Pancreas (tissue), 10 donors: ENCODE measurements at regions of chr22 and their contacts with region 1.

Region 1: DNA sequence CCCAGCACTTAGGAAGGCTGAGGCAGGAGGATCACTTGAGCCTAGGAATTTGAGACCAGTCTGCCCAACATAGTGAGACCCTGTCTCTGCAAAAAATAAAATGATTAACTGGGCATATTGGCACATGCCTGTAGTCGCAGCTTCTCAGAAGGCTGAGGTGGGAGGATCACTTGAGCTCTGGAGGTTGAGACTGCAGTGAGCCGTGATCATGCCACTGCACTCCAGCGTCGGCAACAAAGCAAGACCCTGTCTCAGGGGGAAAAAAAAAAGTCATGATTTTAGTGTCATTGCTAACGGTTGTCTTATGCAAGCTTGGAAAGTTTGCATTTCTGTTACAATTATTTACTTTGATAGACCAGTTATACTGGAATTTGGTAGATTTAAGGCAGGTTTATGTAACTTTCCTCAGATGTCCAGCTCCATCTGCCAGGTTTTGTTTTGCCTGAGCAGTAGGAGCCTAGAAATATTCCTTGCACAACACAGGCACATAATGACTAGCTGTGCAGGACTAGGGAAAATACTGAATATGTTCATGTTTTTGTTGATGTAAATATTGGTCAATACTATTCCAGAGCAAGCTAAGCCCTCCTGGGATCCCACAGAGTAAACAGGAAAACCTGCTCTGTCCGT is 12.1 kb downstream of the UBE2L3 start:
- DNase-seq: no peak
- ATAC-seq: no peak
- H3K4me3 ChIP-seq: no peak overlapping the region
- H3K27ac ChIP-seq: no peak overlapping the region
- H3K4me1 ChIP-seq: peaks cover 8 to 11% (median 10%) of the 10 kb centered on the region in 3 donors
- H3K27me3 ChIP-seq: no peaks in the 10 kb centered on the region
- CTCF ChIP-seq: no peak

Region 2: DNA sequence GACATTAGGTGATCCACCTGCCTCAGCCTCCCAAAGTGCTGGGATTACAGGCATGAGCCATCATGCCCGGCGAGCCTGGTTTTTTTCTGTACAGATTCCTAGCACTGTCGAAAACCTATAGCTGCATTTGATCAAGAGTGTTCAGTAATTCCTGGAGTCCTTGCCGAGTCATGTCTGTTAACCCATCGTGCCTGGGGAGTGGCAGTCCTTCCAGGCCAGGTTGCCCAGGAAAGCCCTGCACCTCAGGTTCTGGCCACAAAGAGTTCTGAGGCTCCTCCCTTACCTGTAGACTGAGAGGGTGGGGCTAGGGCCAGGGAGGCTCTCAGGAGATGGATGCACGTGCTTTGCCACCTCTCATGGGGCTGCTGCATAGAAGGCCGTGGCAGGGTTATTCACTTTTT is 33.2 kb after region 1 on chr22:
- intact Hi-C with region 1: loop called in 1 of 3 experiments (anchors 5 kb)
- DNase-seq: no peak
- ATAC-seq: peak in 1 of 4 donors; percentile 20
- H3K4me3 ChIP-seq: no peak overlapping the region
- H3K27ac ChIP-seq: no peak overlapping the region
- H3K4me1 ChIP-seq: peaks cover 0 to 10% (median 5%) of the 10 kb centered on the region in 3 donors
- H3K27me3 ChIP-seq: no peaks in the 10 kb centered on the region
- CTCF ChIP-seq: no peak

Region 3: GRCh38 chr22:21629262-21630149 is 49.9 kb after region 1 on chr22 and contains the start of gene YDJC:
- intact Hi-C with region 1: loop called in 1 of 3 experiments (anchors 5 kb)
- DNase-seq: peak; percentile 92 to 98 (median 97)
- ATAC-seq: peak; percentile 95 to 98 (median 96)
- H3K4me3 ChIP-seq: peak within 1 kb of the TSS; percentile 91 to 100 (median 96)
- H3K27ac ChIP-seq: peak within 1 kb of the TSS; percentile 68 to 80 (median 72)
- H3K4me1 ChIP-seq: peaks cover 11 to 12% (median 11%) of the 10 kb centered on the region in 3 donors
- H3K27me3 ChIP-seq: no peaks in the 10 kb centered on the region
- CTCF ChIP-seq: peak; percentile 23 to 48 (median 26)
- total RNA-seq, gene YDJC: 11.2 to 22.5 (median 13.6) TPM

Region 4: DNA sequence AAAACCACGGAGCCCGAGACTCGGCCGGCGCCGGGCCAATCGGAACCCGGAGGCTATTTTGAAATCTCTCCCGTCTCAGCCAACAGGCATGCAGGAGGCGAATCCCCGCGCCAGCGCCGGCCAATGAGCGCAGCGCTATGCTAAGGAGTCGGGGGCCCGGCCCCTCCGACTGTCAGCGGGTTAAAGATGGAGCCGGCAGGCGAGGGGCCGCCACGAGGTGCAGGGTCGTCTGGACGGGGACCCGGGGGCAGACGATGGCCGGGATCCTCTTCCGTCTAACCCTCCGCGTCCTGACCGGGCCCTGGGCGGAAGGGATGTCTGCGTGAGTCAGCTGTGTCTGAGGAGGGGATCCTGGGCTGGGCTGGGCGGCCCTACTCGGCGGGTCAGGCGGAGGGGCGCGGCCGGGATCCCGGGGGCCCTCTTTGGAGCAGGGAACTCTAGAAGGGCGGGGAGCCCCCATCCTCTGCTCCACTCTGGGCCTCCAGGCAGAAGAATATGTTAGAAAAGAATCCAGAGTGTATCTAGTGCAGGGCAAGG is 72.4 kb after region 1 on chr22:
- intact Hi-C with region 1: no loop called
- DNase-seq: peak in 5 of 6 donors; percentile 62 to 87 (median 65)
- ATAC-seq: peak; percentile 54 to 90 (median 86)
- H3K4me3 ChIP-seq: peak overlapping the region; percentile 14 to 50 (median 19)
- H3K27ac ChIP-seq: no peak overlapping the region
- H3K4me1 ChIP-seq: no peaks in the 10 kb centered on the region
- H3K27me3 ChIP-seq: no peaks in the 10 kb centered on the region
- CTCF ChIP-seq: no peak

Region 5: DNA sequence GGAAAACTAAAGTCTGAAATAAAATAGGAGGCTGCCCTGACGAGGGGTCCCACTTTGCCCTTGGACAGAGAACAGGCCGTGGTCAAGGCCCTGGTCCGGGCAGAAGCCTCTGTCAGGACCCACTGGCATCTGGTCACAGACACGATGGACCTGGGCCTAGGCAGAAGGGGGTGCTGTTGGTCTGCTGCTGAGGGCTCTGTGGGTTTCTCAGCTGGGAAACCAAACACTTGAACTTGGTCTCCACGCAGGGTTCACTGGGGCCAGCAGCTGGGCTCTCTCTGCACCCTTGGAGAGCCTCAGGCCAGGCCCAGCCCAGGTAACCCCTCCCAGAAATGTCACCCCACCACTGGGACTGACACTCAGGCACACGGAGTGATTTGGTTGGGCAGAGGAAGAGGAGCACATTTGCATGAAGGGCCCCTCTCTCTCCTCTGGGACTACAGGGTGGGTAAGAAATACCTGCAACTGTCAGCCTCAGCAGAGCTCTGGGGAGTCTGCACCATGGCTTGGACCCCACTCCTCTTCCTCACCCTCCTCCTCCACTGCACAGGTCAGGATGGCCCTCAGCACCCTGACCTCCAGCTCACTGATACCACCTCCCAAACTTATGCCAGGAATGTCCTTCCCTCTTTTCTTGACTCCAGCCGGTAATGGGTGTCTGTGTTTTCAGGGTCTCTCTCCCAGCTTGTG is 451.0 kb after region 1 on chr22:
- intact Hi-C with region 1: no loop called
- DNase-seq: no peak
- ATAC-seq: peak in 1 of 4 donors; percentile 46
- H3K4me3 ChIP-seq: no peak overlapping the region
- H3K27ac ChIP-seq: no peak overlapping the region
- H3K4me1 ChIP-seq: no peaks in the 10 kb centered on the region
- H3K27me3 ChIP-seq: no peaks in the 10 kb centered on the region
- CTCF ChIP-seq: no peak